Activated T-helper 1 cell treated with anti-CD3 and anti-CD28 coated beads, Interleukin-12 subunit alpha, Interleukin-12 subunit beta, Interleukin-2, Interleukin-4 antibody, amounts not matched to agents 30 ng/mL and 10 ng/mL and 1 ng/mL, durations not matched to agents 14 hours and 24 hours and 36 hours (primary cell): ENCODE measurements at regions of chr2 and their contacts with region 1.

Region 1: DNA sequence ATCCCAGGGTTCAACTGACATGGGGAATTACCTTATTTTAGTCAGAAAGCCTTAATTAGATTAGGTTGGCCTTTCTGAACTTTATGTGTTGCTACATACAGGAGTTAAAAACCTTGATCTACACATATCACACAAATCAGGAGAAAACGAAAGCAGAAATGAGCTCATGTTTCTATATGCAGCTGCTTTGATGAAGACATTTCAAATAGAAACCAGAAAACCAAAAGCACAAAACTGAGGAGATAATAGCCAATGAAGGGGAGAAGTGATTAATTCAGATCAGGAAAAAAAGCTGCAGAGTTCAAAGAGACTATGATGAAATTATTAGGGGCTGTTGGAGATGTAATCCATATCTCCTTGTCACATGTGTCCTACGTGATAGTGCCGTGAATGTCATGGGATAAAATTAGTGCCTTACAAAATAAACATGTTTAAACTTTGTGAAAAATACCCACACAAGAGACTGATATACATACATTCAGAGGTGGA is 255.0 kb downstream of the CAMKMT start:
- DNase-seq: no peak
- H3K4me3 Mint-ChIP-seq: no peak overlapping the region
- H3K27ac Mint-ChIP-seq: no peak overlapping the region
- H3K4me1 Mint-ChIP-seq: no peaks in the 10 kb centered on the region
- H3K27me3 Mint-ChIP-seq: no peaks in the 10 kb centered on the region

Region 2: GRCh38 chr2:44136186-44136585 is 480.5 kb before region 1 on chr2:
- intact Hi-C with region 1: no loop called
- DNase-seq: no peak
- H3K4me3 Mint-ChIP-seq: no peak overlapping the region
- H3K27ac Mint-ChIP-seq: no peak overlapping the region
- H3K4me1 Mint-ChIP-seq: no peaks in the 10 kb centered on the region
- H3K27me3 Mint-ChIP-seq: peaks cover 17% of the 10 kb centered on the region

Region 3: DNA sequence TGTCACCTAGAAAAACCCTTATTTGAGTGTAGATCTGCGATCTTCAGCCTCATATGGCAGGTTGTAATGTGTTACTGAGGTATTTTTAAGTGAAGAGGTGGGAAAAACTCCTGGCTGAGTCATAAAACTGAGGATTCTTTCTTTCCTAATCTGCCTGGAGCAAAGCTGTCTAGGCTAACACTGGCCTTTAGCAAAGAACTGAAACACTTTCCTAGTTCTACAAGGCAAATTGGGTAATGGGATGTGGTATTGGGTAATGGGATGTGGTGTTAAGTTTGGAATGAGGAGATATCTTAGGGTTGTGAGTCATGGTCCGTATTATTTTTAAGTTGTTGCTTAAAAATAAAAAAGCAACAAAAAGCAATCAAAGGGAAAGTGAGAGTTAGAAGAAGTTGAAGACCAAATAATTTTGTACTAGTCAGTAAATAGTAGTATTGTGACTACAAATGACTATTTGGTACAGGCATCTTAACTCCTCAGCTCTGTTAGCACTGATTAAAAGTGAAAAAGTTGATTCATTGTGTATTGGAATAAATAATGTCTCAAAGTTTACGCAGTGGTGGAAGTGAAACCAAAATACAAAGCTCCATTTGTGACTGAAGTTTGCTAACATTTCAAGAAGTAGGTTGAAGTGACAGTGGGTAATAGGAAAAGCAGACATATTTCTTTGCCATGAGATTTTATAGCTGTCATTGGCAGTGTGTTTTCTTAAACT is 38.1 kb before region 1 on chr2:
- intact Hi-C with region 1: loop called (anchors 2 kb)
- DNase-seq: no peak
- H3K4me3 Mint-ChIP-seq: peak overlapping the region; percentile 24
- H3K27ac Mint-ChIP-seq: peak overlapping the region; percentile 76
- H3K4me1 Mint-ChIP-seq: peaks cover 29% of the 10 kb centered on the region
- H3K27me3 Mint-ChIP-seq: no peaks in the 10 kb centered on the region